Heart right ventricle (tissue), 16 donors: ENCODE measurements at regions of chr14 and their contacts with region 1.

Region 1: GRCh38 chr14:61568572-61569131 is 126.7 kb upstream of the HIF1A start:
- DNase-seq: peak in 1 of 2 donors; percentile 37
- ATAC-seq: peak; percentile 49 to 84 (median 64)
- H3K4me3 ChIP-seq: peak overlapping the region in 8 of 10 donors; percentile 7 to 44 (median 38)
- H3K27ac ChIP-seq: peak overlapping the region; percentile 50 to 91 (median 77)
- H3K4me1 ChIP-seq: peaks cover 9 to 100% (median 53%) of the 10 kb centered on the region in 9 donors
- H3K27me3 ChIP-seq: no peaks in the 10 kb centered on the region
- CTCF ChIP-seq: peak in 3 of 9 donors; percentile 16 to 24 (median 24)

Region 2: DNA sequence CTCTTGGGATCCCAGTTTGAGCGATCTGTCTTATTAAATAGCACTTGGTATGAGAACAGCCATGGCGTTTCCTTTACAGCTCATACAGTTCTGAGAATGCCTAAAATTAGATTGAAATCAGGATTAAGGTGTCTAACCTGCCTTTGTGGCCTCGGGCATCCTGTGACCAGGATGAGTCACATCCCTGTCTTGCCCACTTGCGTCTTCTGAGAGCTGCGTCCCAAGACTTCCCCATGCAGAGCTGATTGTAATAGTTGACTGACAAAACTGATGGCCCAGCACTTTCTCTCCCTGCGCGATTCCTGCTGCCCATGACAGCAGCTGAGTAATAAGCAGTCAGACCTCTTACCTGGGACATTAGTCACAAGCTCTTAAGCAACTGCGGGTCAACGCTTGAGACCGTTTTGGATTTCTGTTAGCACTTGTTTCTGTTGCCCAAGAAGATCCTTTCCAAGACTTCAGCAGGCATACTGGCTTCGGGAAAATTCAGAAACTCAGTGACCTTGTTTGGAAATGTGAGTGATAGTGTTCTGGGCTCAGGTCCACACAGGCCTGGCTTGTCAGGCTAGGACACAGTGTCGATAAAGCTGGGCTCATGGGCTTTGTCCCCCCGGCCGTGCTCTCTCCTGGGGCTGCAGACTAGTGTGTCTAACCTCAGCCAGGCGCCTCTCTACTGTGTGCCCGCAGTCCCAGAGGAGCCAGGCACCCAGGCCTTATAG is 43.2 kb before region 1 on chr14:
- intact Hi-C with region 1: loop called in 1 of 10 experiments (anchors 5 kb)
- DNase-seq: peak; percentile 45 to 52
- ATAC-seq: peak; percentile 64 to 91 (median 77)
- H3K4me3 ChIP-seq: no peak overlapping the region
- H3K27ac ChIP-seq: peak overlapping the region; percentile 48 to 92 (median 79)
- H3K4me1 ChIP-seq: peaks cover 15 to 70% (median 52%) of the 10 kb centered on the region in 9 donors
- H3K27me3 ChIP-seq: no peaks in the 10 kb centered on the region
- CTCF ChIP-seq: no peak

Region 3: GRCh38 chr14:61710853-61711817 is 142.5 kb after region 1 on chr14:
- intact Hi-C with region 1: loop called in 1 of 10 experiments (anchors 10 kb)
- DNase-seq: no peak
- ATAC-seq: peak in 1 of 8 donors; percentile 30
- H3K4me3 ChIP-seq: no peak overlapping the region
- H3K27ac ChIP-seq: no peak overlapping the region
- H3K4me1 ChIP-seq: peaks cover 0 to 80% (median 44%) of the 10 kb centered on the region in 9 donors
- H3K27me3 ChIP-seq: no peaks in the 10 kb centered on the region
- CTCF ChIP-seq: no peak

Region 4: DNA sequence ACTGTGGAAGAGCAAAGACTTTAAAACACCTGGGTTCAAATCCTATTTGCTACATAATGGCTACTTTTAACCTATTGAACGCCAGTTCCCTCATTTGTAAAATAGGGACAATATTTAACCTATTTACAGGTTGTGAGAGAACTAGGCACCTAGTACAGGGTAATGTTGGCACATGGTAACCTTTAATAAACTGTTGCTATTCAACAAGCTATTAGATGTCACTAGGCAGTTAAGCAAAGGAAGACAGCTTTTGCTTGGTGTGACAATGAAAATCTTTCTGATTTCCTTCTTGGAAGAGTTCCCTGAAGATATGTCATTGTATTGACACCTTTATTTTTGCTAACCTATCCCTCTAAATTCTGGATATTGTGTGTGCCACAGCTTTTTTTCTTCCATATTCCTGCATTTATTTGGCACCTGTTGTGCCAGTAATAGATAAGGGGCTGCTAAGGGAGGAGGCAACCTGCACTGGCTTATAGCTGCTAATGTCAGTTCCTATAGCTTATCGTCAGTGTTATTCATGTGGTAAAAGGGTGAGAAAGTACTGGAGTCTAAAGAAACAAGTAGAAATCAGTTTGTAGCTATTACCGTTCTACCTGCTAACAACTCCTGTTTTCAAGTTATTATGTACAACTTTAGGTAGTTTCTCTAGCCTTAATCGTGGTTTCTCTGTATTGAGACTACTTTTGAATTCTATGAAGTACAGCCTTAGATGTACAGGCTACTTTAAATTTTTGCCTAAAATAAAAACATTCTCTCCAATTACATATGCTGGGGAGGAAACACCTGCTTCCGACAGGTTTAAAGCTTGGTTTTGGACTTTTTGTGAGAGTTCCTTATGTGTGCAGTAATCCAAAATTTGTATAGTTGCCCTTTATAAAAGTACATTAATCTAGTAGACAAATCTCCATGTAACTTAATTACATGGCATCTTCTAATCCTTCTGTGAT is 151.0 kb after region 1 on chr14:
- intact Hi-C with region 1: loop called in 2 of 10 experiments (anchors 10 kb)
- DNase-seq: no peak
- ATAC-seq: peak in 5 of 8 donors; percentile 35 to 55 (median 43)
- H3K4me3 ChIP-seq: no peak overlapping the region
- H3K27ac ChIP-seq: peak overlapping the region in 6 of 10 donors; percentile 2 to 72 (median 32)
- H3K4me1 ChIP-seq: peaks cover 0 to 77% (median 44%) of the 10 kb centered on the region in 9 donors
- H3K27me3 ChIP-seq: no peaks in the 10 kb centered on the region
- CTCF ChIP-seq: no peak